Activated B cell treated with CpG ODN at 0.5 μM for 24 hours (primary cell): ENCODE measurements at regions of chr1 and their contacts with region 1.

Region 1: GRCh38 chr1:27392096-27392777 is at the start of gene GPR3:
- DNase-seq: peak; percentile 91
- ATAC-seq: peak; percentile 91
- H3K4me3 Mint-ChIP-seq: peak within 1 kb of the TSS; percentile 82
- H3K27ac Mint-ChIP-seq: peak within 1 kb of the TSS; percentile 60
- H3K4me1 Mint-ChIP-seq: peaks cover 18% of the 10 kb centered on the region
- H3K27me3 Mint-ChIP-seq: no peaks in the 10 kb centered on the region
- CTCF ChIP-seq: no peak
- total RNA-seq, gene GPR3: 0.11 TPM in 1 of 2 replicates, not detected in the other

Region 2: DNA sequence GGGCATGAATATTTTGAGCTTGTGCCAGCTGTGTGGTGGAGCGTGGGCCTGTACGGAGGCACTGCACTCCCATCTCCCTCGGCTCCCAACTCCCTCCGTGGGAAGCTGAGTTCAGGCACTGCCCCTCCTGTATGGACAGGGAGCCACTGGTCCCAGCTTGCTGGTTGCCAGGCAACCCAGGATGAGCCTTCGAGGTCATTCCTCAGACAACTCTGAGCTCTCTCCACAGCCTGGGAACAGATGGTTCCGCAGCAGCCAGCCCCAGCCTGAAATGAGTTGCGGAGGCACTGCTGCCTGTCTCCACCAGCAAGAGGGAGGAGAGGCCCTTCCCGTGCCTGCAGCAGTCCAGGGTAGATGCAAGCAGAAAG is 321.2 kb before region 1 on chr1:
- CTCF ChIA-PET with region 1: no interaction called
- POLR2A ChIA-PET with region 1: no interaction called
- intact Hi-C with region 1: no loop called
- DNase-seq: no peak
- ATAC-seq: no peak
- H3K4me3 Mint-ChIP-seq: no peak overlapping the region
- H3K27ac Mint-ChIP-seq: no peak overlapping the region
- H3K4me1 Mint-ChIP-seq: no peaks in the 10 kb centered on the region
- H3K27me3 Mint-ChIP-seq: peaks cover 14% of the 10 kb centered on the region
- CTCF ChIP-seq: no peak

Region 3: GRCh38 chr1:27102707-27103491 is 289.3 kb before region 1 on chr1:
- CTCF ChIA-PET with region 1: interaction called, 8 read pairs
- POLR2A ChIA-PET with region 1: no interaction called
- intact Hi-C with region 1: loop called (anchors 1 kb)
- DNase-seq: peak; percentile 85
- ATAC-seq: peak; percentile 33
- H3K4me3 Mint-ChIP-seq: no peak overlapping the region
- H3K27ac Mint-ChIP-seq: no peak overlapping the region
- H3K4me1 Mint-ChIP-seq: peaks cover 41% of the 10 kb centered on the region
- H3K27me3 Mint-ChIP-seq: no peaks in the 10 kb centered on the region
- CTCF ChIP-seq: no peak

Region 4: GRCh38 chr1:27179379-27179778 is 212.9 kb before region 1 on chr1:
- CTCF ChIA-PET with region 1: no interaction called
- POLR2A ChIA-PET with region 1: interaction called, 10 read pairs
- intact Hi-C with region 1: no loop called
- DNase-seq: no peak
- ATAC-seq: no peak
- H3K4me3 Mint-ChIP-seq: no peak overlapping the region
- H3K27ac Mint-ChIP-seq: no peak overlapping the region
- H3K4me1 Mint-ChIP-seq: no peaks in the 10 kb centered on the region
- H3K27me3 Mint-ChIP-seq: no peaks in the 10 kb centered on the region
- CTCF ChIP-seq: no peak

Region 5: DNA sequence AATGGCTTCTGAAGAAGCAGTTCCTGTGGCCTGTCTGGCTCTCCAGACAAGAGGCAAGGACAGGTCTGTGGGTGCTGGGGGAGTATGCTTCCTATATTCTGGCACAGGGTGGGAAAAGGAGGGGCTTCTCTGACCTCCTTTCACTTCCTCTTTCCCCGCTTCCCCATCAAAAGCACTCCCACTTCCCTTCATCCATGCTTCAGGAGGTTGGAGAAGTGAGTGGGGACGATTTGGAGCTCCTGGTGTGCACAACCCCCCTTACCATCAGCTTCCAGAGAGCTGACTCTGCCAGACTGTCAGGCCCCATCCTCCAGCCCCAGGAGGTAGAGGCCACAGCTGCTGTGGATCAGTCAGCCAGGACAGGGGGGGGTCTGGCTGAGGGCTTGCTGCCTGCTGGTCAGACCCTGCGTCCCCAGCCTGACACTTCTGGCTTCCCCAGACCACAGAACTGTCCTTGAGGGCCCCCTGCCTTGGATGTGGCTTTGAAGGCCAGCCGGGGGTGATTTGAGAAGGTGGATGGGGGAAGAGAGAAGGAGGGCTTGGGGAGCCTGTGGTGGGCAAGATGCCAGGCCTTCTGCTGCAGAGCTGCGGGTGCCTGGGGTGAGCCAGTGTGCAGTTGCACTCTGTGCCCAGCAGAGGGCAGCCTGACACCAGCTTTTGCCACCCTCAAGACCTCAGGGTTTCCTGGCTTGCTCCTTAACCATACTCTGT is 91.7 kb before region 1 on chr1:
- CTCF ChIA-PET with region 1: interaction called, 208 read pairs
- POLR2A ChIA-PET with region 1: interaction called, 11 read pairs
- intact Hi-C with region 1: loop called (anchors 1 kb)
- DNase-seq: peak; percentile 72
- ATAC-seq: peak; percentile 90
- H3K4me3 Mint-ChIP-seq: no peak overlapping the region
- H3K27ac Mint-ChIP-seq: no peak overlapping the region
- H3K4me1 Mint-ChIP-seq: peaks cover 3% of the 10 kb centered on the region
- H3K27me3 Mint-ChIP-seq: no peaks in the 10 kb centered on the region
- CTCF ChIP-seq: peak; percentile 99

Region 6: GRCh38 chr1:27332536-27333281 is 59.5 kb before region 1 on chr1:
- CTCF ChIA-PET with region 1: interaction called, 27 read pairs
- POLR2A ChIA-PET with region 1: interaction called, 12 read pairs
- intact Hi-C with region 1: loop called (anchors 1 kb)
- DNase-seq: peak; percentile 49
- ATAC-seq: peak; percentile 92
- H3K4me3 Mint-ChIP-seq: no peak overlapping the region
- H3K27ac Mint-ChIP-seq: no peak overlapping the region
- H3K4me1 Mint-ChIP-seq: peaks cover 34% of the 10 kb centered on the region
- H3K27me3 Mint-ChIP-seq: no peaks in the 10 kb centered on the region
- CTCF ChIP-seq: no peak

Region 7: DNA sequence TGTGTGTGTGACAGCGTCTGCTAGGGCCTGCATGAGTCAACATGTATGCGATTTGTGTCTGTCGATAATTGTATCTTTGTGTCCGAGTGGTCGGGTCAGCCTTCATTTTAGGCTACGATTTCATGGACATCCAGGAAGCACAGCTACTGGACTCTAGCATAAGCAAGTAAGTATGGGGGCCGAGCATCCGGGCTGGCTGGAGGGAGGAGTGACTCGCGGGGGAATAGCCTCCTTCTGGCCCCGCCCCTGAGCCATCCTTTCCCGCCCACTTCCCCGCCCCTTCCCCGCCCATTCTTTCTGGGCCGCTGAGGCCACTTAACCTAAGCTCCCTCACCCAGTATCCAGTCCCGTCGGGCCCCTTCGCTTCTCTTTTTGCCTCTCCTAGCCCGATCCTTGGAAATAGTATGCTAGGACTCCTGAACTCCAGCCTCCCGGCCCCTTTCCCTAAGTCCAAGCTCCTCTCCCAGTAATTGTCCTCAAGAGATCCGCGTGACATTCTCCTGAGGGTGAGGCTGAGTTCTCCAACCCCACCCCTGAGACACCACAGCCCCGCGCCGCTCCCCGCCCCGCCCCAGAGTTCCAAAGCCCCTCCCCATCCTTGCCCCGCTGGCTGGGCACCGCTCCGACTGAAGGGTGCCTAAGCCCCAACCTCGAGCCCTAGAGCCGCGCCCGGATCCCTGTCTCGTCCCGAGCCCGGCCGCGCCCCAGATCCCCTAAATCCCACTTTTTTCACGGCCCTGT is 26.7 kb before region 1 on chr1:
- CTCF ChIA-PET with region 1: interaction called, 24 read pairs
- POLR2A ChIA-PET with region 1: interaction called, 10 read pairs
- intact Hi-C with region 1: loop called (anchors 1 kb)
- DNase-seq: peak; percentile 68
- ATAC-seq: peak; percentile 71
- H3K4me3 Mint-ChIP-seq: peak overlapping the region; percentile 91
- H3K27ac Mint-ChIP-seq: peak overlapping the region; percentile 68
- H3K4me1 Mint-ChIP-seq: peaks cover 55% of the 10 kb centered on the region
- H3K27me3 Mint-ChIP-seq: no peaks in the 10 kb centered on the region
- CTCF ChIP-seq: no peak

Region 8: GRCh38 chr1:27496604-27497155 is 104.4 kb after region 1 on chr1:
- CTCF ChIA-PET with region 1: no interaction called
- POLR2A ChIA-PET with region 1: interaction called, 10 read pairs
- intact Hi-C with region 1: no loop called
- DNase-seq: no peak
- ATAC-seq: no peak
- H3K4me3 Mint-ChIP-seq: no peak overlapping the region
- H3K27ac Mint-ChIP-seq: no peak overlapping the region
- H3K4me1 Mint-ChIP-seq: peaks cover 34% of the 10 kb centered on the region
- H3K27me3 Mint-ChIP-seq: no peaks in the 10 kb centered on the region
- CTCF ChIP-seq: no peak

Region 9: GRCh38 chr1:28965271-28965870 is 1573.1 kb after region 1 on chr1:
- CTCF ChIA-PET with region 1: no interaction called
- POLR2A ChIA-PET with region 1: no interaction called
- intact Hi-C with region 1: no loop called
- DNase-seq: no peak
- ATAC-seq: no peak
- H3K4me3 Mint-ChIP-seq: no peak overlapping the region
- H3K27ac Mint-ChIP-seq: no peak overlapping the region
- H3K4me1 Mint-ChIP-seq: peaks cover 40% of the 10 kb centered on the region
- H3K27me3 Mint-ChIP-seq: no peaks in the 10 kb centered on the region
- CTCF ChIP-seq: no peak